Activated CD4-positive, alpha-beta T cell treated with anti-CD3 and anti-CD28 coated beads, Interleukin-2, amount 10 ng/mL, durations not matched to agents 24 days and 14 days (primary cell): ENCODE measurements at regions of chr1 and their contacts with region 1.

Region 1: GRCh38 chr1:157193702-157194391 is 55.7 kb upstream of the ETV3 start:
- DNase-seq: peak; percentile 87
- H3K4me3 Mint-ChIP-seq: no peak overlapping the region
- H3K27ac Mint-ChIP-seq: no peak overlapping the region
- H3K4me1 Mint-ChIP-seq: peaks cover 3% of the 10 kb centered on the region
- H3K27me3 Mint-ChIP-seq: peaks cover 39% of the 10 kb centered on the region

Region 2: GRCh38 chr1:157209514-157209913 is 15.7 kb after region 1 on chr1:
- intact Hi-C with region 1: no loop called
- DNase-seq: no peak
- H3K4me3 Mint-ChIP-seq: no peak overlapping the region
- H3K27ac Mint-ChIP-seq: no peak overlapping the region
- H3K4me1 Mint-ChIP-seq: no peaks in the 10 kb centered on the region
- H3K27me3 Mint-ChIP-seq: peaks cover 24% of the 10 kb centered on the region

Region 3: DNA sequence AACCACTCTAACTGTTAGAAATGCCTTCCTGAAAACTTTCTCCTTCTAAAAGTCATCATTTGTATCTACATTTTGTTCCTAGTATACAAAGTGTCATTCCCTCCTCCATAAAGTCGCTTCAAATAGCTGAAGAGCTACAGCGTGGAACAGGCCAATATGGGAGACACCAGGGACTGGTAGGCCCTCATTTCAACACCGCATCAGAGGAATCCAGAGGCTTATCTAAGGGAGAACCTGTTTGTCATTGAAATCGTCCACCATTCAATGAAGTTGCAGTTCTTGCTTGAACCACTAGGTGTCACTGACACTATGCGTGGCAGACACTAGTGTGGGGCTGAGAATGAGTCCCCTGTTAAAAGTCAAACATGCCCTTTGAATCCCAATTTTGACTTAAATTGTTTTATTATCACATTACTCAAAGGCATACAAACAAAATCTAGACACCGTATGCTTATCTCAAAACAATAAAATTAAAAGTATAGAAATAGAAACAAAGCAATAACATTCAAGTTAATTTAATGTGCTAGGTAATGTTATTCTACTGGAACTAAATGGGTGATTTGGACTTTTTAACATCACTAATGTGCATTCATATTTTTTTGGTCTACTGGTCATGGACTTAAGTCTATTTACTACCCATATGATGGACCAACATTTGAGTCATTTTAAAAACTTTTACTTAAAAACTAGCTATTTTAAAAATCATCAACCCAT is 176.1 kb after region 1 on chr1:
- intact Hi-C with region 1: loop called (anchors 10 kb)
- DNase-seq: peak; percentile 84
- H3K4me3 Mint-ChIP-seq: no peak overlapping the region
- H3K27ac Mint-ChIP-seq: no peak overlapping the region
- H3K4me1 Mint-ChIP-seq: no peaks in the 10 kb centered on the region
- H3K27me3 Mint-ChIP-seq: peaks cover 13% of the 10 kb centered on the region